Adrenal gland (tissue), 19 donors: ENCODE measurements at regions of chr1 and their contacts with region 1.

Region 1: DNA sequence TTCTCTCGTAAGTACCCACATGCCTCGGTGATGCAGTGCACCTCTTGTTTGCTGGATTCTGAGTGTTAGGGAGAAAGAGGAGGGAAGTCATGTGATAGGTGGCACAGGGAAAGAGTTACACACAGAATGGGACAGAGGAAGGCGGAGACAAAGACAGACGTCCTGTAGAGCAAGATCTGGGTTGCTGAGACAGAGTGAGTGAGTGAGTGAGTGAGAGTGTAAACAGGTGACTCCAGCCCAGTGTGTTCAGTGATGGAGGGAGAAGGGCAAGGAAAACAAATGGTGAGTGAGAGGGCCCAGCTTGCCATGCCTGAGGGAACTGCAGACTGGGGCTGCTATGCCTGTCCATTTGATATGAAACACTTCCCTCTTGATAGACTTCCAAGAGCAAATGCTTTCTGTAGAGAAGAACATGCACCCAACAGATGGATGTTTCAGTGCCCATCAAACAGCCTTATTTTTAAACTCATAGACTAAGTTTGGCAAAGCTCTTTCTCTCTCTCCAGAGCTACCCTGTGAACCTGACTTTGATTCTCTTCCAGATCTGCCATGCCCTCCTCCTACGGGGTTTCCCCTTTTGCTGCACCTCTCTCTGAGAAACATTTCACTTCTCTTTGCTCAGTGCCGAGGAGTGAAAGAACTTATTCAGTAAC is 209.9 kb upstream of the COA6 start:
- DNase-seq: no peak
- H3K4me3 ChIP-seq: no peak overlapping the region
- H3K27ac ChIP-seq: no peak overlapping the region
- H3K4me1 ChIP-seq: no peaks in the 10 kb centered on the region
- H3K27me3 ChIP-seq: no peaks in the 10 kb centered on the region
- CTCF ChIP-seq: no peak
- POLR2A ChIP-seq: no peak

Region 2: GRCh38 chr1:234315091-234315541 is 151.7 kb after region 1 on chr1:
- intact Hi-C with region 1: loop called in 1 of 2 experiments (anchors 5 kb)
- DNase-seq: no peak
- H3K4me3 ChIP-seq: no peak overlapping the region
- H3K27ac ChIP-seq: no peak overlapping the region
- H3K4me1 ChIP-seq: no peaks in the 10 kb centered on the region
- H3K27me3 ChIP-seq: no peaks in the 10 kb centered on the region
- CTCF ChIP-seq: no peak
- POLR2A ChIP-seq: no peak